Activated CD8-positive, alpha-beta memory T cell treated with anti-CD3 and anti-CD28 coated beads, Interleukin-2, amount 10 ng/mL, durations not matched to agents 7 days and 5 days (primary cell): ENCODE measurements at regions of chr1 and their contacts with region 1.

Region 1: DNA sequence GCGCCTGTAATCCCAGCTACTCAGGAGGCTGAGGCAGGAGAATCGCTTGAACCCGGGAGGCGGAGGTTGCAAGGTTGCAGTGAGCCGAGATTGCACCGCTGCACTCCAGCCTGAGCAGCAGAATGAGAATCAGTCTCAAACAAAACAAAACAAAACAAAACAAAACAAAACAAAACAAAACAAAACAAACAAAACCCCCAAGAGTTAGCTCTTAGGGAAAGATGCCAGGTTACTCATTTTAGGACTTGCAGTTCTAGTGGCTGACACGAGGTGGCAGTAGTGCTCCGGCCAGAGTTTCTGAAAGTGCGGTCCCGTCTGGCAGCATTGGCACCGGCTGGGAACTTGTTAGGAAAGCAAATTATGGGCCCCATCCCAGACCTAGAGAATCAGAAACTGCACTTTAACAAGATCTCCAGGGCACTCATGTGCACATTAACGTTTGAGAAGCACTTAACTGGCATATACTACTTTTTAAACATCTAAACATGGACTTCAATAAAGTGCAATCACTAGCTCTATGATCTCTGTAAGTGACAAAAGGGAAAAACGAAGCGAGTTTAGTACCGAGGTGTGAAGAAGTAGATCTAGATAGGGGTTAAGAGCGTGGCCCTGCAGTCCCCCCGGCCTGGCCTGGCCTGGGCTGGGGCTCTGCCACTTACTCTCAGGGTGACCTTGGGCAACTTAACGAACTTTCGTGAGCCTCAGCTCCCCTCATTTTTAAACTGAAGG is 41.9 kb upstream of the TNFRSF1B start:
- DNase-seq: peak; percentile 83
- ATAC-seq: peak; percentile 69
- H3K4me3 Mint-ChIP-seq: no peak overlapping the region
- H3K27ac Mint-ChIP-seq: peak overlapping the region; percentile 55
- H3K4me1 Mint-ChIP-seq: peaks cover 17% of the 10 kb centered on the region
- H3K27me3 Mint-ChIP-seq: no peaks in the 10 kb centered on the region

Region 2: GRCh38 chr1:12087797-12088314 is 37.0 kb before region 1 on chr1:
- CTCF ChIA-PET with region 1: interaction called, 12 read pairs
- DNase-seq: peak; percentile 80
- ATAC-seq: peak; percentile 71
- H3K4me3 Mint-ChIP-seq: peak overlapping the region; percentile 60
- H3K27ac Mint-ChIP-seq: peak overlapping the region; percentile 93
- H3K4me1 Mint-ChIP-seq: peaks cover 53% of the 10 kb centered on the region
- H3K27me3 Mint-ChIP-seq: no peaks in the 10 kb centered on the region

Region 3: GRCh38 chr1:12138196-12139168 is 13.6 kb after region 1 on chr1:
- CTCF ChIA-PET with region 1: interaction called, 27 read pairs
- DNase-seq: no peak
- ATAC-seq: no peak
- H3K4me3 Mint-ChIP-seq: no peak overlapping the region
- H3K27ac Mint-ChIP-seq: peak overlapping the region; percentile 14
- H3K4me1 Mint-ChIP-seq: peaks cover 5% of the 10 kb centered on the region
- H3K27me3 Mint-ChIP-seq: no peaks in the 10 kb centered on the region

Region 4: DNA sequence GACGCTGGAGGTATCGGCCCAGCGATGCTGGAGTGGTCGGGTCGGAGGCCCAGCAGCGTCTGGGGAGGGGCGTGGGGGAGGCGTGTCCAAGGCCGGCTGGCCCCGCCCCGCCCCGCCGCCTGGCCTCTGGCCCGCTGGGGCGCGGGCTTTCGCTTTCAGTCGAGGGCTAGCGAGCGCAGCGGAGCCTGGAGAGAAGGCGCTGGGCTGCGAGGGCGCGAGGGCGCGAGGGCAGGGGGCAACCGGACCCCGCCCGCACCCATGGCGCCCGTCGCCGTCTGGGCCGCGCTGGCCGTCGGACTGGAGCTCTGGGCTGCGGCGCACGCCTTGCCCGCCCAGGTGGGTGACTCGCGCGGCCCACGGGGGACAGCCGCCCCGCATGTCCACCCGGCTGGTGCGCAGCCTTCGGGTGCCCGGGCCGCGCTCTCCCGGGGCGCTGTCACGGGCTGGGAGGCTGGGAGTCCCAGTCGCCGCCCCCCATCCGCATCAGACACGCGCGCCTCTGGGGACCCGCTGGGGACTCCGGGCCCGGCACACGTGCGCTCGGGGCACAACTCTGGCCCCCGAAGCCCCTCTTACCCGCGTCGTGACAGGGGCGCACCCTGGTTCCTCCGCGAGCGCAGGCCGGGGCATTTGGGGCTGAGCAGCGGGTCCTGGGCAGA is 42.1 kb after region 1 on chr1 and contains the start of gene TNFRSF1B:
- CTCF ChIA-PET with region 1: interaction called, 27 read pairs
- DNase-seq: peak; percentile 79
- ATAC-seq: peak; percentile 67
- H3K4me3 Mint-ChIP-seq: peak within 1 kb of the TSS; percentile 100
- H3K27ac Mint-ChIP-seq: peak within 1 kb of the TSS; percentile 94
- H3K4me1 Mint-ChIP-seq: peaks cover 75% of the 10 kb centered on the region
- H3K27me3 Mint-ChIP-seq: no peaks in the 10 kb centered on the region
- total RNA-seq, gene TNFRSF1B: 294 to 370 TPM

Region 5: GRCh38 chr1:12208764-12209494 is 84.1 kb after region 1 on chr1:
- CTCF ChIA-PET with region 1: interaction called, 296 read pairs
- DNase-seq: peak; percentile 88
- ATAC-seq: peak; percentile 79
- H3K4me3 Mint-ChIP-seq: no peak overlapping the region
- H3K27ac Mint-ChIP-seq: peak overlapping the region; percentile 61
- H3K4me1 Mint-ChIP-seq: peaks cover 46% of the 10 kb centered on the region
- H3K27me3 Mint-ChIP-seq: no peaks in the 10 kb centered on the region

Region 6: GRCh38 chr1:12244078-12244477 is 119.2 kb after region 1 on chr1:
- CTCF ChIA-PET with region 1: interaction called, 61 read pairs
- DNase-seq: no peak
- ATAC-seq: no peak
- H3K4me3 Mint-ChIP-seq: no peak overlapping the region
- H3K27ac Mint-ChIP-seq: no peak overlapping the region
- H3K4me1 Mint-ChIP-seq: no peaks in the 10 kb centered on the region
- H3K27me3 Mint-ChIP-seq: no peaks in the 10 kb centered on the region

Region 7: DNA sequence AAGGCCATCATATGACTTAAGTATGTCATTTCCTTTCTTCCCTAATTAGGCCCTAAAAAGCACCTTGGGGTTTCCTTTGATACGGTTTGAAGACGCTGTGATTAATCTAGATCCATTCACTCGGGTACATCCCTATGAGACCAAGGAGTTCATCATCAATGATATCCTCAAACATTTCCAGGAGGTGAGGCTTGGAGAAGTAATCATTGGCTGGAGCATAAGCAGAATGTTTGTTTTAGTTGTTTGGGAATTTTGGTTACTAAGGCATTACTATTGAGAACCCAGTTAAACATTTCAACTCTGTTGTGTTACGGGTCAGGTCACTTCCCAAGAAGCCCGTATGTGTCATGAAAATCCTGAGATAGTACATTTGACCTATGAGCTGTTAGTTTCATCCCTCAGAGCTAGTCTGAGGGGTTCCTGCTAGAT is 290.2 kb after region 1 on chr1:
- CTCF ChIA-PET with region 1: no interaction called
- DNase-seq: no peak
- ATAC-seq: no peak
- H3K4me3 Mint-ChIP-seq: no peak overlapping the region
- H3K27ac Mint-ChIP-seq: no peak overlapping the region
- H3K4me1 Mint-ChIP-seq: peaks cover 4% of the 10 kb centered on the region
- H3K27me3 Mint-ChIP-seq: no peaks in the 10 kb centered on the region

Region 8: GRCh38 chr1:12658531-12659453 is 533.9 kb after region 1 on chr1:
- CTCF ChIA-PET with region 1: interaction called, 14 read pairs
- DNase-seq: peak; percentile 77
- ATAC-seq: peak; percentile 77
- H3K4me3 Mint-ChIP-seq: peak overlapping the region; percentile 11
- H3K27ac Mint-ChIP-seq: no peak overlapping the region
- H3K4me1 Mint-ChIP-seq: peaks cover 6% of the 10 kb centered on the region
- H3K27me3 Mint-ChIP-seq: peaks cover 8% of the 10 kb centered on the region